ENCODE measurements at regions of chr10 and their contacts with region 1.

Region 1: DNA sequence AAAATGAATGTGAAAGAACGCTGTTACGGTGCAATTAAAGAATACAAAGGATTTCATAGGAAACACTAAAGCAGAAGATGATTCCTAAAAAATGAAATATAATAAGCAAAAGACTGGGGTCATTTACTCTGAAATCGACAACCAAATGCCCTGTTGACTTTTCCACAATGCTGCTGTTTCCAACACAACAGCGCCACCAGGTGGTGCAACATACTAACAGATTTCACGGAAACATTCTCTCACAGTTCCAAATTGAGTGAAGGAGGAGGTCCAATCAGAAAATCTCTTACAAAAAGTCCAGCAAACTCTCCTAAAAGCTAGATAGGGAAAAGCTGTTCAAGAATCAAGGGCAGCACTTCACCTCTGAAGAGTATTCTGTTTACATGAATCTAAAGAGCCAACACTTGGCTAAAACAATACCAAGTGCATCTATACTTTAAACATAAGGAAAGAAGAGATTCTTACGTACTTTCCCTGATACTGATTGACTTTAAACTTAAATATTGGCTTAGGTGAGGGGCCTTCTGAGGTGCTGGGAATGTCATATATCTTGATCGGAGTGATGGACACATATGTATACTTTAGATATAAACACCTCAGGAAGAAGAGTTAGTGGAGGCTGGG is 55.9 kb downstream of the UPF2 start:
- DNase-seq: peak; percentile 79
- ATAC-seq: peak; percentile 53
- H3K4me3 ChIP-seq: no peak overlapping the region
- H3K4me3 Mint-ChIP-seq: no peak overlapping the region
- H3K27ac ChIP-seq: peak overlapping the region in 1 of 2 donors; percentile 4
- H3K27ac Mint-ChIP-seq: no peak overlapping the region
- H3K4me1 ChIP-seq: peaks cover 6 to 11% of the 10 kb centered on the region in 2 donors
- H3K4me1 Mint-ChIP-seq: peaks cover 23% of the 10 kb centered on the region
- H3K27me3 ChIP-seq: no peaks in the 10 kb centered on the region
- H3K27me3 Mint-ChIP-seq: no peaks in the 10 kb centered on the region
- CTCF ChIP-seq: peak; percentile 96

Region 2: DNA sequence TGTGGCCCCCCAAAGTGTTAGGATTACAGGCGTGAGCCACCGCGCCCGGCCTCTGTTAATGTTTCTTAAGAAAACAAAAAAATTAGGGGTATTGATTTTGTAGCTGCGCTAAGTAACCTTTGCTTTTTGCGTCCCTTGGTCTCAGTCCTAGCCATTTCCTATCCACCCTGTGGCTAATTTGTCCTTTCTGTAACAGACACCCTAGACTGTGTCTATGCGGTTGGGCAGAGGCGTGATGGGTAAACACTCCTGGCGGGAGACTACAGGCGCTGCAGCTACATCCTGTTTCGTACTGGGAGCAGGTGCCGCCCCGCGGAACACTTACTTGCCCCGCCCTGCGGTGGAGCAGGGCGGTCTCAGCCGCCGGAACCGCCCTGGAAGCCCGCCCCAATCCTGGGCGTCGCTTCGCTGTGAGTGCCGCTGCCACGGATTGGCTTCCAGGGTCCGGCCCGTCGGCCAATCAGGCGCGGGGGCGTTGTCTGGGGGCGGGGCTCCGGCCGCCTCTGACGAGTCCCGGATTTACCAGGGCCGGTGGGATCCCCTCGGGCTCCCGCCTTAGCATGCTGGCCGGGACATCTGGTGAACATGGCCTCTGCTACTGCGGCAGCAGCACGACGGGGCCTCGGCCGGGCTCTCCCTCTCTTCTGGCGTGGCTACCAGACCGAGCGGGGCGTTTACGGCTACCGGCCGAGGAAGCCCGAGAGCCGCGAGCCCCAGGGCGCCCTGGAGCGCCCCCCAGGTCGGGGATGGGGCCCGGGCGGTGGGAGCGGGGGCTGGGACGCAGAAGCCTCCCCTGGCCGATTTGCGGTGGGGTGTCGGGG is 82.0 kb after region 1 on chr10 and contains the start of gene DHTKD1:
- CTCF ChIA-PET with region 1: interaction called, 3 read pairs
- POLR2A ChIA-PET with region 1: no interaction called
- intact Hi-C with region 1: loop called (anchors 2 kb)
- DNase-seq: peak; percentile 98
- ATAC-seq: peak; percentile 98
- H3K4me3 ChIP-seq: peak within 1 kb of the TSS; percentile 92 to 98 (median 96)
- H3K4me3 Mint-ChIP-seq: peak within 1 kb of the TSS; percentile 88
- H3K27ac ChIP-seq: peak within 1 kb of the TSS; percentile 80 to 91
- H3K27ac Mint-ChIP-seq: peak within 1 kb of the TSS; percentile 95
- H3K4me1 ChIP-seq: peaks cover 27 to 33% of the 10 kb centered on the region in 2 donors
- H3K4me1 Mint-ChIP-seq: peaks cover 41% of the 10 kb centered on the region
- H3K27me3 ChIP-seq: no peaks in the 10 kb centered on the region
- H3K27me3 Mint-ChIP-seq: no peaks in the 10 kb centered on the region
- CTCF ChIP-seq: peak; percentile 44
- total RNA-seq, gene DHTKD1: 72.3 and 77.0 TPM in 2 replicates

Measured in B cell (primary cell).